Activated B cell treated with CpG ODN at 0.5 μM for 24 hours (primary cell): ENCODE measurements at regions of chr1 and their contacts with region 1.

Region 1: GRCh38 chr1:117059678-117060440 is at the start of gene TTF2:
- DNase-seq: peak; percentile 80
- ATAC-seq: peak; percentile 97
- H3K4me3 Mint-ChIP-seq: no peak within 1 kb of the TSS
- H3K27ac Mint-ChIP-seq: no peak within 1 kb of the TSS
- H3K4me1 Mint-ChIP-seq: peaks cover 26% of the 10 kb centered on the region
- H3K27me3 Mint-ChIP-seq: no peaks in the 10 kb centered on the region
- CTCF ChIP-seq: no peak
- total RNA-seq, gene TTF2: 33.4 and 37.7 TPM in 2 replicates

Region 2: DNA sequence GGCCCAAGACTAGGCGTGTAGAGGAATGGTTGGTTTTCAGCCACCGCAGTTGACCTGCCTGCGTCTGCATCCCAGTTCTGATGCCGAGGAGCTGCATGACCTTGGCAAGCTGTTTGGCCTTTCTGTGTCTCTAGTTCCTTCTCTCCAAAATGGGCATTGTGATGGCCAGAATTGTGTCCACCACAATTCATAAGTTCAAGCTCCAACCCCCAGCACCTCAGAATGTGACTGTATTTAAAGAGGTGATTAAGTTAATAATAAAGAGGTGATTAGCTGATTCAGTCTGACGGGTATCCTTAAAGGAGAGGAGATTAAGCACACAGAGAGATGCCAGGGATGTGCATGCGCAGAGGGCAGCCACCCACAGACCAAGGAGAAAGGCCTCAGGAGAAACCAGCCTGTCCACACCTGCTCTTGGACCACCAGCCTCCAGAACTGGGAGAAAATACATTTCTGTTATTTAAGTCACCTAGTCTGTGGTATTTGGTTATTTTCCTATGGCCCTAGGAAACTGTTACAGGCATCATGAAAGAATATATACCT is 920.2 kb before region 1 on chr1:
- CTCF ChIA-PET with region 1: interaction called, 3 read pairs
- POLR2A ChIA-PET with region 1: no interaction called
- intact Hi-C with region 1: loop called (anchors 1 kb)
- DNase-seq: no peak
- ATAC-seq: no peak
- H3K4me3 Mint-ChIP-seq: no peak overlapping the region
- H3K27ac Mint-ChIP-seq: no peak overlapping the region
- H3K4me1 Mint-ChIP-seq: peaks cover 5% of the 10 kb centered on the region
- H3K27me3 Mint-ChIP-seq: peaks cover 5% of the 10 kb centered on the region
- CTCF ChIP-seq: no peak

Region 3: DNA sequence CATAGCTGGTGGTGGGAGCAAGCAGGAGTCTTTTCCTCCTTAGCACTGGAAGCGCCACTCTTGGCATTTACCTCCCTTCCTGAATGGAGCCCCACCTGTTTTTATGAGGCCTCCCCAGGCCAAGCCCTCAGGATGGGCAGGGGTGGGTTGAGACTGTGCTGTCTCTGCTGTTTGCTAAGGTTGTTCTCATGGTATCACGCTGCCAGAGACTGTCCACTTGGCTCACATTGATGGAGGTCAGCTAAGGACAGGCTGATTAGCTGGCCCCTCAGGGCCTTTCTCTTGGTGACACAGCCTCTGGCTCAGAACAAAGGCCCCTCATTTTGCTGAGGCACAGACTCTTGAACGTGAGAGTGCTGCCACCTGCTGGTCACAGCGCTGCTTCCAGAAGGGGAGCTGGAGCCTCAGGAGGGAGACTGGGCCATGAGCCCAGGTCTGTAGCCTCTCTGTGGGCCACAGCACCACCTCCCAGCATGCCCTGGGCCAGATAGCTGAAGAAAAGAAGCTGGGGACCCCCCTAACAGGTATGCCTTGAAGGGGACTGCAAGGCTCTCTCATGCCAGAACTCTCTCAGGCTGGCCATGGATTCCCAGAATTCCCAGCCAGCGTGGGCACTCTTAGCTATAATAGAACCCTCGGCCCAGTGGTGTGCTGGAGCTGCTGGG is 574.7 kb before region 1 on chr1:
- CTCF ChIA-PET with region 1: interaction called, 5 read pairs
- POLR2A ChIA-PET with region 1: no interaction called
- intact Hi-C with region 1: loop called (anchors 1 kb)
- DNase-seq: peak; percentile 71
- ATAC-seq: peak; percentile 92
- H3K4me3 Mint-ChIP-seq: no peak overlapping the region
- H3K27ac Mint-ChIP-seq: no peak overlapping the region
- H3K4me1 Mint-ChIP-seq: peaks cover 12% of the 10 kb centered on the region
- H3K27me3 Mint-ChIP-seq: no peaks in the 10 kb centered on the region
- CTCF ChIP-seq: peak; percentile 31

Region 4: GRCh38 chr1:116724765-116725375 is 335.0 kb before region 1 on chr1:
- CTCF ChIA-PET with region 1: interaction called, 6 read pairs
- POLR2A ChIA-PET with region 1: no interaction called
- intact Hi-C with region 1: loop called (anchors 1 kb)
- DNase-seq: no peak
- ATAC-seq: peak; percentile 54
- H3K4me3 Mint-ChIP-seq: no peak overlapping the region
- H3K27ac Mint-ChIP-seq: no peak overlapping the region
- H3K4me1 Mint-ChIP-seq: peaks cover 6% of the 10 kb centered on the region
- H3K27me3 Mint-ChIP-seq: no peaks in the 10 kb centered on the region
- CTCF ChIP-seq: peak; percentile 60

Region 5: GRCh38 chr1:116962987-116963639 is 96.7 kb before region 1 on chr1:
- CTCF ChIA-PET with region 1: no interaction called
- POLR2A ChIA-PET with region 1: no interaction called
- intact Hi-C with region 1: no loop called
- DNase-seq: no peak
- ATAC-seq: no peak
- H3K4me3 Mint-ChIP-seq: no peak overlapping the region
- H3K27ac Mint-ChIP-seq: no peak overlapping the region
- H3K4me1 Mint-ChIP-seq: no peaks in the 10 kb centered on the region
- H3K27me3 Mint-ChIP-seq: no peaks in the 10 kb centered on the region
- CTCF ChIP-seq: no peak

Region 6: DNA sequence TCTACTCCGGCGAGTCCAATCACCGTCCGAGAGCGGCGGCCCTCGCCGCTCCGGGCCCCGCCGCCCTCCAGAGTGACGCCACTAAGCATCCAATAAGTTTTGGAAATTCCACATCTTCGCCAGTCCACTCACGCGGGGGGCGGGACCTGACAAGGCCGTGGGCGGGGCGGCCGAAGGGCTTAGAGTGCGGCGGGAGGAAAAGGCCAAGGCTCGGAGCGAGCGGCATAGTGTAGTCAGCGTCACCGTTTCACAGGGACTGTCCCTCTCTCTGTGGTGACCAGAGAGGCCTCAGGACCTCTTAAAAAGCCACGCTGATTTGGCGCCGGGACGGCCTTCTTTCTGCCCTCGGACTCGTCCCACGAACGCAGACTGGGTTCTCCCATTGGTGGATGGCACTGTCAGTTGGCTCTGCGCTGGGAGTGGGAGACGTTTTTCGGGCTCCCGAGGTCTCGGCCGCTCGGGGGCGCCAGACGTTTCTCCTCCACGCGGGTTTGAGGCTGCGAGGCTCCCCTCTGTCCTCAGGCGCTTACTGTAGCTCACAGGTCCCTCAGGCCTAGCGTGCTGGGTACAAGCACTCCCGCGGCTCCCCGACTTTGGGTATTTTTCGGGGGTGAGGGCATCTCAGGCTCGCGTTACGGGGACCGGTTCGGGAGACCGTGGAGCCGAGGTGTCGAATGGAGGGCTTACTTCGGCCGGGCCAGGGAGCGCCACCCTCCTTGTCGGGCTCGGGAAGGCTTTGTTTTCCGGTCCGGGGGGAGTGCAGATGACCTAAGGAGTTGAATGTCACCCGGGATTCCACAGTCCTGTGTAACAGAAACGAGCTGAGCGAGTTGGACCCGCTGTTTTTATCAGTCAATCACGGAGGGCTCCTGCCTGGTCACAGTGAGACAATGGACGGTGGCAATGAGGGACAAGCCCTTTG is 62.2 kb after region 1 on chr1:
- CTCF ChIA-PET with region 1: no interaction called
- POLR2A ChIA-PET with region 1: no interaction called
- intact Hi-C with region 1: loop called (anchors 1 kb)
- DNase-seq: peak; percentile 76
- ATAC-seq: peak; percentile 88
- H3K4me3 Mint-ChIP-seq: peak overlapping the region; percentile 88
- H3K27ac Mint-ChIP-seq: peak overlapping the region; percentile 54
- H3K4me1 Mint-ChIP-seq: peaks cover 13% of the 10 kb centered on the region
- H3K27me3 Mint-ChIP-seq: peaks cover 2% of the 10 kb centered on the region
- CTCF ChIP-seq: no peak

Region 7: GRCh38 chr1:117416546-117417125 is 356.8 kb after region 1 on chr1:
- CTCF ChIA-PET with region 1: no interaction called
- POLR2A ChIA-PET with region 1: no interaction called
- intact Hi-C with region 1: no loop called
- DNase-seq: no peak
- ATAC-seq: no peak
- H3K4me3 Mint-ChIP-seq: no peak overlapping the region
- H3K27ac Mint-ChIP-seq: no peak overlapping the region
- H3K4me1 Mint-ChIP-seq: no peaks in the 10 kb centered on the region
- H3K27me3 Mint-ChIP-seq: no peaks in the 10 kb centered on the region
- CTCF ChIP-seq: no peak

Region 8: DNA sequence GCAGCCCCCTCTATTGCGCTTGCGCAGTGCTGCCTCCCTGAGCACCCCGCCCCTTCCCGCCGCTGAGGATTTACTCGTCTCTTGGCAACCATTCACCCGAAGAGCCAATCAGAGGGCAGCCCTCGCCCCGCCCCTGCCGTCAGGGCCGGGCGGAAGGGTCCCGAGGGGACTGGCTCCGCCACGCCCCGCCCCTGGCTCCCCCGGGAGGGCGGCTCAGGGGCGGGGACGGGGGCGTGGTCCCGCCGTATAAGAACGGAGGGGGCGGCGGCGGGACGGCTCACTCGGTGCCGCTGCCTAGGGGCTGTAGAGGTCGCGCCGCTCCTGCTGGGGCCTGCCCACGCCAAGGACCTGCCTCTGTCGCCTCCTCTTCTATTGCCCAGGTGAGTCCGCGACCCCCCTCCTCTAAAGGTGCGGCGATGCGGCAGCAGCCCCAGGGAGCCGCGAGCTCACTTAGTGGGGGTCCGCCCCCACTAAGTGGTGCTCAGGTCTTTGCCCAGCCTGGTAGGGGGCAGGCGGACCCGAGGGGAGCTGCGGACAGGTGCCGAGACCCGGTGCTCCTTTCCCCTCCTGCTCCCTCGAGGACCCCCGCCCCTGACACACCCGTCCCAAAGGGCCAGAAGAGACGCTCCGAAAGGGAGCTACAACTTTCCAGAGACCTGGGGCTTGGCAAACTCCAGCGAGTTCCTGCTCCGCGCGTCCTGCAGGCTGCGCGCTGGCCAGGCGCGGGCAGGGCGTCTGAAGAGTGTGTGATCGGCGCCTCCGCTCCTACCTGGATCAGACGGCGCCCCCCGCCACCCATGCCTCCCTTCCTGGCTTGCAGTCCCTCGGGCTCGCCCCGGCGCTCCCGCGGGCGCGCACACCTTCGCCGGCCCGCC is 546.2 kb after region 1 on chr1 and contains the start of gene TENT5C:
- CTCF ChIA-PET with region 1: no interaction called
- POLR2A ChIA-PET with region 1: no interaction called
- intact Hi-C with region 1: loop called (anchors 1 kb)
- DNase-seq: peak; percentile 99
- ATAC-seq: peak; percentile 88
- H3K4me3 Mint-ChIP-seq: peak within 1 kb of the TSS; percentile 99
- H3K27ac Mint-ChIP-seq: peak within 1 kb of the TSS; percentile 99
- H3K4me1 Mint-ChIP-seq: peaks cover 50% of the 10 kb centered on the region
- H3K27me3 Mint-ChIP-seq: no peaks in the 10 kb centered on the region
- CTCF ChIP-seq: no peak
- total RNA-seq, gene TENT5C: 56.2 and 59.3 TPM in 2 replicates